ENCODE measurements at regions of chr1 and their contacts with region 1.

Region 1: GRCh38 chr1:100719490-100719889 is at the start of gene VCAM1:
- DNase-seq: peak in 1 of 2 donors; percentile 38
- ATAC-seq: no peak
- H3K4me3 ChIP-seq: no peak within 1 kb of the TSS
- H3K4me3 Mint-ChIP-seq: no peak within 1 kb of the TSS
- H3K27ac ChIP-seq: no peak within 1 kb of the TSS
- H3K27ac Mint-ChIP-seq: no peak within 1 kb of the TSS
- H3K4me1 ChIP-seq: no peaks in the 10 kb centered on the region
- H3K4me1 Mint-ChIP-seq: peaks cover 11 to 13% of the 10 kb centered on the region in 2 donors
- H3K27me3 ChIP-seq: peaks cover 3% of the 10 kb centered on the region
- H3K27me3 Mint-ChIP-seq: peaks cover 18 to 43% of the 10 kb centered on the region in 2 donors
- CTCF ChIP-seq: no peak
- total RNA-seq, gene VCAM1: 0.12 to 0.15 TPM in 2 of 3 donors, not detected in the other

Region 2: GRCh38 chr1:100028765-100029164 is 690.7 kb before region 1 on chr1:
- intact Hi-C with region 1: loop called (anchors 10 kb)
- DNase-seq: peak; percentile 29 to 75
- ATAC-seq: peak; percentile 85 to 96 (median 94)
- H3K4me3 ChIP-seq: no peak overlapping the region
- H3K4me3 Mint-ChIP-seq: peak overlapping the region; percentile 80
- H3K27ac ChIP-seq: peak overlapping the region; percentile 93
- H3K27ac Mint-ChIP-seq: peak overlapping the region; percentile 97 to 100
- H3K4me1 ChIP-seq: peaks cover 17% of the 10 kb centered on the region
- H3K4me1 Mint-ChIP-seq: peaks cover 18 to 20% of the 10 kb centered on the region in 2 donors
- H3K27me3 ChIP-seq: no peaks in the 10 kb centered on the region
- H3K27me3 Mint-ChIP-seq: no peaks in the 10 kb centered on the region
- CTCF ChIP-seq: no peak

Region 3: GRCh38 chr1:100584761-100585745 is 134.4 kb before region 1 on chr1:
- intact Hi-C with region 1: loop called (anchors 10 kb)
- DNase-seq: no peak
- ATAC-seq: no peak
- H3K4me3 ChIP-seq: no peak overlapping the region
- H3K4me3 Mint-ChIP-seq: no peak overlapping the region
- H3K27ac ChIP-seq: no peak overlapping the region
- H3K27ac Mint-ChIP-seq: no peak overlapping the region
- H3K4me1 ChIP-seq: peaks cover 5% of the 10 kb centered on the region
- H3K4me1 Mint-ChIP-seq: peaks cover 11% of the 10 kb centered on the region in 2 donors
- H3K27me3 ChIP-seq: no peaks in the 10 kb centered on the region
- H3K27me3 Mint-ChIP-seq: peaks cover 15 to 21% of the 10 kb centered on the region in 2 donors
- CTCF ChIP-seq: no peak

Region 4: GRCh38 chr1:101128211-101128727 is 408.8 kb after region 1 on chr1:
- intact Hi-C with region 1: loop called (anchors 10 kb)
- DNase-seq: peak in 1 of 2 donors; percentile 67
- ATAC-seq: peak; percentile 72 to 80 (median 74)
- H3K4me3 ChIP-seq: no peak overlapping the region
- H3K4me3 Mint-ChIP-seq: peak overlapping the region; percentile 78
- H3K27ac ChIP-seq: peak overlapping the region; percentile 54
- H3K27ac Mint-ChIP-seq: peak overlapping the region; percentile 68 to 76
- H3K4me1 ChIP-seq: peaks cover 18% of the 10 kb centered on the region
- H3K4me1 Mint-ChIP-seq: peaks cover 41 to 60% of the 10 kb centered on the region in 2 donors
- H3K27me3 ChIP-seq: no peaks in the 10 kb centered on the region
- H3K27me3 Mint-ChIP-seq: peaks cover 13 to 19% of the 10 kb centered on the region in 2 donors
- CTCF ChIP-seq: no peak

Measured in natural killer cell (primary cell).